Natural killer cell (primary cell): ENCODE measurements at regions of chr2 and their contacts with region 1.

Region 1: DNA sequence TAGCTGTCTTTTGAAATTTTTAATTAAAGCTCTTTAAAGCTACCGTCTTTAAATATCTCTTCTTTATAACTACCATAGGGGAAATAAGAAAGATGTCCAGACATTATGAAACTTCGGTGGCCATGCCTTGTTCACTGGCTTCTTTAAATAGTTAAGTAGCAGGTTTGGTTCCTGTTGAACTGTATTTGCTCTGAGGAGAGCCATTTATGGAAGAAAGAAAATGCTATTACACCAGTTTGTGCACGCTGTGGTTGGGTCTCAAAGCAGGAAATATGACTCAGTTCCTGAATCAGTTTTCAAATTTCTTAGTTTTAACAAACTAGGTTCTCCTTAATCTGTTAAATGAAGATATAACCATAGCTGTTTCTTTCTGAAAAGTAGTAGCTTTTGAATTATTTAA is 12.2 kb downstream of the ARPC2 start:
- DNase-seq: peak in 1 of 2 donors; percentile 76
- ATAC-seq: peak; percentile 63 to 84 (median 64)
- H3K4me3 ChIP-seq: no peak overlapping the region
- H3K4me3 Mint-ChIP-seq: peak overlapping the region; percentile 84
- H3K27ac ChIP-seq: peak overlapping the region; percentile 32
- H3K27ac Mint-ChIP-seq: peak overlapping the region; percentile 98 to 99
- H3K4me1 ChIP-seq: peaks cover 47% of the 10 kb centered on the region
- H3K4me1 Mint-ChIP-seq: peaks cover 75 to 76% of the 10 kb centered on the region in 2 donors
- H3K27me3 ChIP-seq: no peaks in the 10 kb centered on the region
- H3K27me3 Mint-ChIP-seq: no peaks in the 10 kb centered on the region
- CTCF ChIP-seq: no peak

Region 2: DNA sequence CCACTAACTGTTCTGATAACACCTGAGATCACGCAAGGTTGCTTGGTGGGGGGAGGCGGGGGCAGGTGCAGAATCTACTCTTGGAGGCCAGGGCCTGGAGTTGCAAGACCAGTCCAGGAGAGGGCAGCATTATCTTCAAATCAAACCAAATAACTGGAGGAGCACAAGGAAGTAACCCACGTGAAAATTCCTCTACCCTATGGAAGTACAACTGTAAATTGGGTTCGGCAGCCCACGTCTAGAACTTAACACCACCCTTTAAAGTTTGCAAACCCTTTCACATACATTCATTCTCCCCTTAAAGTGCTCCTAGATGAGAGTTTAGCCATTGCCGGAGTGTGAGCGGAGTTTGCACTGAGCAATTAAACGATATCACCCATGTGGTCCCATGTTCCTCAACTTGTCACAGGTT is 42.9 kb before region 1 on chr2:
- intact Hi-C with region 1: loop called (anchors 1 kb)
- DNase-seq: peak; percentile 51 to 87
- ATAC-seq: peak; percentile 89 to 98 (median 95)
- H3K4me3 ChIP-seq: no peak overlapping the region
- H3K4me3 Mint-ChIP-seq: no peak overlapping the region
- H3K27ac ChIP-seq: no peak overlapping the region
- H3K27ac Mint-ChIP-seq: no peak overlapping the region
- H3K4me1 ChIP-seq: peaks cover 12% of the 10 kb centered on the region
- H3K4me1 Mint-ChIP-seq: peaks cover 16 to 31% of the 10 kb centered on the region in 2 donors
- H3K27me3 ChIP-seq: no peaks in the 10 kb centered on the region
- H3K27me3 Mint-ChIP-seq: no peaks in the 10 kb centered on the region
- CTCF ChIP-seq: peak; percentile 84

Region 3: GRCh38 chr2:218216674-218217359 is 12.4 kb before region 1 on chr2 and contains the start of gene ARPC2:
- intact Hi-C with region 1: loop called (anchors 1 kb)
- DNase-seq: peak; percentile 97 to 98
- ATAC-seq: peak; percentile 81 to 92 (median 87)
- H3K4me3 ChIP-seq: peak within 1 kb of the TSS; percentile 100
- H3K4me3 Mint-ChIP-seq: peak within 1 kb of the TSS; percentile 96
- H3K27ac ChIP-seq: peak within 1 kb of the TSS; percentile 100
- H3K27ac Mint-ChIP-seq: peak within 1 kb of the TSS; percentile 98 to 99
- H3K4me1 ChIP-seq: peaks cover 31% of the 10 kb centered on the region
- H3K4me1 Mint-ChIP-seq: peaks cover 46 to 48% of the 10 kb centered on the region in 2 donors
- H3K27me3 ChIP-seq: no peaks in the 10 kb centered on the region
- H3K27me3 Mint-ChIP-seq: no peaks in the 10 kb centered on the region
- CTCF ChIP-seq: no peak
- total RNA-seq, gene ARPC2: 824 to 880 (median 830) TPM